Right lobe of liver (tissue), 6 donors: ENCODE measurements at regions of chr13 and their contacts with region 1.

Region 1: DNA sequence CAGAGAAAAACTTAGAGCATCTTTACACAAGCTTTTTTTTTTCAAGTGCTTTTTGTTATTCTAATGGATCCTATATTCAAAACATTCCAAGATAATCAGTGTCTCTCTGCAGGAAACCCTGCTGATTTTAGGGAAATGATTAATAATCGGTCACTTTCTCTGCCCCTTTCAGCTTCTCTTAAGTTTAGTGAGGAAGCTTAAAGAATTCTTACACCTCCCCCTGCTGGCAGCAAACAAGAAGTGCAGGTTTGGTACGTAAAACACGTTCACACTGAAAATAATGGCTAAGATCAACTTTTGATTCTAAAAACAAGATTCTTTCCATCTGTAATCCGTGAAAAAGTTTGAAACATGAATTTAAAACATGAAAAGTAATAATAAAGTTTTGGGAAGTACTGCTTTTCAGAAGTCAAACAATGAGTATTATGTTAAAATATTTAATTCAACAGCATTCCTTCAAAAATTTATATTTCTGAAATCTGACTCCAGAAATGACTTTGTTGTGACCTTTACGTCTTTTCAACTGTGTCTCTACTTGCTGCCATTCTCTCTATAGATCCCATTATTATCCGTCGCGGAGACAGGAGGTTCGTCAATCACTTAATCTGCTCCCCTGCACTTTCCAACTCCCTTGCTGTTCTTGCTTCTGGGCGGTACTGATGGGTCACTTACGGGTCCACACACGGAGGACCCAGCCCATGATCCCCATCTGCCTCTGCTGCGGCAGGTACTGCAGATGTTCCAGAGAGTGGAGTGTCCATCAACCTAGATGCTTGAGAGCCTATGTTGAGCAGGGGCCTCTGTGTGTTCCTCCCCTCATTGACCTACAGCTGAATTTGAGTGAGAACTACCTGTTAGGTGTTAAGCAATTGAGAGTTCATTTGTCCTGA is 203.1 kb upstream of the EDNRB start:
- DNase-seq: no peak
- ATAC-seq: peak; percentile 68 to 87 (median 82)
- H3K4me3 ChIP-seq: no peak overlapping the region
- H3K27ac ChIP-seq: no peak overlapping the region
- H3K4me1 ChIP-seq: no peaks in the 10 kb centered on the region
- H3K27me3 ChIP-seq: no peaks in the 10 kb centered on the region
- CTCF ChIP-seq: peak; percentile 77 to 87 (median 82)
- POLR2A ChIP-seq: no peak

Region 2: DNA sequence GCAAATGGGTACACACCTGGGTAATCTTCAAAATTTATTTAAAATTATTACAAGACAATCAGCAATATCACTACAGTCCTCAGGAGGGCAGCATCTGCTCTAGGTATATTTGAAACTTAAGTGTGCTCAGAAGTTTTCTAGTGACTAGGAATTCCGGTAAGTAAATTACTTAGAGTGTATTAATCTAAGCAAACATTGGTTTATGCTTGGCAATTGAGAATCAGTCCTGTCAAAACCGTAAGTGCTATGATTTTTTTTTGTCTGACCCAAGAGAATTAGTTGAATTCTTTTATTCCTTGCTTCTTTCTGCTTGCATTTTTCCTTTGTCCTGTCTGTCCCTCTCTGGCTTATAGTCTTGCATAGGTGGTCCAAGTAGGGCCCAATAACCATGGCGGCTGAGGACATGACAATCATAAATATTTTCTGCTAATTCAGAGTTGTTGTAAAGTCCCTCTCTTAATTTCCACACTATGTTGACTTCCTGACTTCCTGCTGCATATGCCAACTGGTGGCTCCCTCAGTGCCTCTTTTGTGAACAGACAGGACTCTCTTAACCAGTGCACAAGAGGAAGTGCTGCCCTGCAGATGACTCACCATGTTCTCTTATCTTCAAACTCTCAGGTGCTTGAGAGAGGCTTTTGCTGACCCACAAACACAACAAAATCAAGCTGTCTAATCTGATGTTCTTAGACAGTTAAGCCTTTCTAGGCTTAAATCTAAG is 342.0 kb before region 1 on chr13:
- intact Hi-C with region 1: loop called (anchors 5 to 10 kb)
- DNase-seq: peak in 1 of 3 donors; percentile 26
- ATAC-seq: peak; percentile 75 to 95 (median 86)
- H3K4me3 ChIP-seq: no peak overlapping the region
- H3K27ac ChIP-seq: no peak overlapping the region
- H3K4me1 ChIP-seq: peaks cover 0 to 6% (median 0%) of the 10 kb centered on the region in 4 donors
- H3K27me3 ChIP-seq: no peaks in the 10 kb centered on the region
- CTCF ChIP-seq: peak; percentile 60 to 73 (median 70)
- POLR2A ChIP-seq: no peak